ENCODE measurements at regions of chr10 and their contacts with region 1.

Region 1: DNA sequence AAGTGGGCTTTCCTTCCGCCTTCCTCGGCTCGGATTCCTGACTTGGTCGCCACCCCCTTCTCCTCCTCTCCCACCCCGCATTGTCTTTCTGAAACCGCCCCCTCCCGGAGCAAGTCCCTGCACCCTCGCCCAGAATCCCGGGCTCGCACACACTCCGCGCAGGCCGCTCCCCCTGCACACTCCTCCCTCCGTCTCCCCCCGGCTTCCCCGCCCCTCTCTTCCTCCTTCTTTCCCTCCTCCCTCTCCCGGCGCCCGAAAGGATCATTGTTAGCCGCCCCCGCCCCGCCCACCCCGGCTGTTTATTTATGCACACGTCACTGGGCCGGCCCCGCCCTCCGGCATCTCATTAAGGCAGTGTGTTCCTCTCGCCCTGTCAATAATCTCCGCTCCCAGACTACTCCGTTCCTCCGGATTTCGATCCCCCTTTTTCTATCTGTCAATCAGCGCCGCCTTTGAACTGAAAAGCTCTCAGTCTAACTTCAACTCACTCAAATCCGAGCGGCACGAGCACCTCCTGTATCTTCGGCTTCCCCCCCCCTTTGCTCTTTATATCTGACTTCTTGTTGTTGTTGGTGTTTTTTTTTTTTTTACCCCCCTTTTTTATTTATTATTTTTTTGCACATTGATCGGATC is at the start of gene TCF7L2:
- DNase-seq: no peak
- H3K4me3 Mint-ChIP-seq: peak within 1 kb of the TSS; percentile 77
- H3K27ac Mint-ChIP-seq: no peak within 1 kb of the TSS
- H3K4me1 Mint-ChIP-seq: peaks cover 16% of the 10 kb centered on the region
- H3K27me3 Mint-ChIP-seq: peaks cover 74% of the 10 kb centered on the region
- total RNA-seq, gene TCF7L2: 0.52 and 0.76 TPM in 2 replicates

Region 2: GRCh38 chr10:113126229-113127201 is 176.5 kb after region 1 on chr10:
- intact Hi-C with region 1: loop called (anchors 10 kb)
- DNase-seq: no peak
- H3K4me3 Mint-ChIP-seq: no peak overlapping the region
- H3K27ac Mint-ChIP-seq: no peak overlapping the region
- H3K4me1 Mint-ChIP-seq: no peaks in the 10 kb centered on the region
- H3K27me3 Mint-ChIP-seq: peaks cover 48% of the 10 kb centered on the region